ENCODE measurements at regions of chr12 and their contacts with region 1.

Region 1: GRCh38 chr12:82620904-82621303 is 65.8 kb upstream of the TMTC2 start:
- DNase-seq: no peak
- ATAC-seq: no peak
- H3K4me3 ChIP-seq: no peak overlapping the region
- H3K27ac ChIP-seq: no peak overlapping the region
- H3K4me1 ChIP-seq: no peaks in the 10 kb centered on the region
- H3K27me3 ChIP-seq: no peaks in the 10 kb centered on the region
- CTCF ChIP-seq: no peak
- EP300 ChIP-seq: no peak
- POLR2A ChIP-seq: no peak
- RAD21 ChIP-seq: no peak

Region 2: DNA sequence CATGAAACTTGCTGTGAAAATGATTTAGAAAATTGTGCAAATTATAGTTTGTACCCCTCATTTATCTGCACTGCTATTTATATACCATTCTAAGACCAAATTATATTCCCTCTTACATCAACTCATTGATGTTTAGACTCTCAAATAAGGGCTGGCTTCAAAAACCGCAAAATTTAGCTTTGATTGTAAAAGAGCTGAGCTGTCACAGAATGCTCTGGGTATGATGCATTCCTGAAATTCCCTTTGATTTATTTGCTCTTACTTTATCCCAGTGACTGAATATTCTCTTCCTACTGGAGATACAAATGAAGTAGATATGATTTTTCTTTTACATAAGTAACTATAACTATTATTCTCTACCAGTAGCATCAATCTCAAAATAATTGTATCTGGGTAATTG is 12.2 kb before region 1 on chr12:
- CTCF ChIA-PET with region 1: interaction called, 4 read pairs
- POLR2A ChIA-PET with region 1: no interaction called
- RAD21 ChIA-PET with region 1: interaction called, 3 read pairs
- SMC1A ChIA-PET with region 1: interaction called, 10 read pairs
- in situ Hi-C with region 1: no loop called
- intact Hi-C with region 1: no loop called
- DNase-seq: no peak
- ATAC-seq: no peak
- H3K4me3 ChIP-seq: no peak overlapping the region
- H3K27ac ChIP-seq: no peak overlapping the region
- H3K4me1 ChIP-seq: no peaks in the 10 kb centered on the region; the same call in 1 of the 2 replicates
- H3K27me3 ChIP-seq: no peaks in the 10 kb centered on the region
- CTCF ChIP-seq: no peak
- EP300 ChIP-seq: no peak
- POLR2A ChIP-seq: no peak
- RAD21 ChIP-seq: no peak

Region 3: DNA sequence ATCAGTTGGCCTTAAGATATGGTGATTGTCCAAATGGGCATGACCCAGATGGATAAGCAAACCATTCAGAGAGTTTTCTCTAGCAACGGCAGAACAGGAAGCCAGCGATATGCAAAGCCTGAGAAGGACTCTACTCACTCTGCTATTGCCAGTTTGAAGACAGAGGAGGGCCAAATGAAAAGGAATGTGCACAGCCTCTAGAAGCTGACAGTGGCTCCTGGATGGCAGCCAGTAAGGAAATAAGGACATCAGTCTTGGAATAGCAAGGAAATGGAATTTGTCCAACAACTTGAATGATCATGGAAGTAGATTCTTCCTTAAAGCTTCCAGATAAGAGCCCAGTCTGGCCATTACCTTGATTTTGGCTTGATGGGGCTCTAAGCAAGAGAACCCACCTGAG is 125.8 kb after region 1 on chr12:
- CTCF ChIA-PET with region 1: no interaction called
- POLR2A ChIA-PET with region 1: no interaction called
- RAD21 ChIA-PET with region 1: no interaction called
- SMC1A ChIA-PET with region 1: no interaction called
- in situ Hi-C with region 1: no loop called
- intact Hi-C with region 1: no loop called
- DNase-seq: no peak
- ATAC-seq: no peak
- H3K4me3 ChIP-seq: no peak overlapping the region
- H3K27ac ChIP-seq: no peak overlapping the region
- H3K4me1 ChIP-seq: no peaks in the 10 kb centered on the region
- H3K27me3 ChIP-seq: no peaks in the 10 kb centered on the region
- CTCF ChIP-seq: no peak
- EP300 ChIP-seq: no peak
- POLR2A ChIP-seq: no peak
- RAD21 ChIP-seq: no peak

Region 4: DNA sequence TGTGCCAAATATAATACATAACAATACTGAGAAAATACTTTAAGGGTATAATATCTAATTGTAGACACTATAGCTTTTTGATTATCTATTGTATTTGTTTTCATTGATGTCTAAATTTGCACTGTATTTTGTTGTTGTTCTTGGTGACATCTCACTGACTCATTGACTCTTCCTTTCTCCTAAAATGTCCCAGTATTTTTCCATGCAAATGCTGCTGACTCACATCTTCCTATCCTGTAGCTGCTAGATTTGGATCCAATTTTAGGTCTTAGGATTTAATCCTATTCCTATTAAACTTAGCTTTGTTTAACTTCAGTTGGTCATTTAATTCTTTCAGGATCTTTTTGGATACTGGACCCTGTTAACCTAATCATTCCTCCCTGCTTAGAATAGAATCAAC is 214.3 kb after region 1 on chr12:
- CTCF ChIA-PET with region 1: no interaction called
- POLR2A ChIA-PET with region 1: no interaction called
- RAD21 ChIA-PET with region 1: no interaction called
- SMC1A ChIA-PET with region 1: no interaction called
- in situ Hi-C with region 1: no loop called
- intact Hi-C with region 1: no loop called
- DNase-seq: no peak
- ATAC-seq: no peak
- H3K4me3 ChIP-seq: no peak overlapping the region
- H3K27ac ChIP-seq: no peak overlapping the region
- H3K4me1 ChIP-seq: no peaks in the 10 kb centered on the region
- H3K27me3 ChIP-seq: no peaks in the 10 kb centered on the region
- CTCF ChIP-seq: no peak
- EP300 ChIP-seq: no peak
- POLR2A ChIP-seq: no peak
- RAD21 ChIP-seq: no peak

Region 5: DNA sequence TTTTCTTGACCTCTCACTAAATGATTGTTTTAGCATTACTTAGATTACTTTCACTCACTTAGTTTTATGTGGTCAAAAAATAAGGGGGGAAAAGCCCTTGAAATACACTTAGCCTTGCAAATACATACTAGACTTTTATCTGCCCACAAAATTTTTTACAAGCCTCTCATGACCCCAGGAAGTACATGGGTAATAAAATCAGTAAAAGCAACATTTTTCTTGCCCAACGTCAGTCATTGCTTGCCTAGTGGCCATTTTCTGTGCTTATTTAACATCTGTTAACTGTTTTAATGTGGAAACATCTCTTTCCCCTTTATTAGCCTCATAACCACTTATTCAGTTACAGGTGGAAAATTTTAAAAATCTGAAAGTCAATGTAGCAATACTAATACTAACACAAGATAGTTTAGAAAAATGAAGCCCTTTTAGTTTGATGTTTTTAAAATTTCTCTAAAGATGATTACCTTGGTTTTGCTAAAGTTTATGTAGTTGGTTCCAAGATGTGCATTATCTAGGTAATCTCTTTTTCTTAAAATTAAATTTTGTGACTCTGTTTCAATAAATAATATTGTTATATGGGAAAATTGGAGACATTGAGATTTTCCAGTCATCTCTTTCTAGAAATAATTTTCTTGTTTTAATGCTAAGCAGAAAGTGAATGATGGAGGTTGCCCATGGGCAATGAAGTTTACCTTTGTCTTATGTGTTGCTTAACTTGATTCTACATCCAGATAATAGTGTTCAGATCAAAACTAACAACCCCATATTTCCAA is 241.4 kb after region 1 on chr12:
- CTCF ChIA-PET with region 1: no interaction called
- POLR2A ChIA-PET with region 1: no interaction called
- RAD21 ChIA-PET with region 1: no interaction called
- SMC1A ChIA-PET with region 1: no interaction called
- in situ Hi-C with region 1: no loop called
- intact Hi-C with region 1: no loop called
- DNase-seq: no peak
- ATAC-seq: no peak
- H3K4me3 ChIP-seq: no peak overlapping the region
- H3K27ac ChIP-seq: no peak overlapping the region
- H3K4me1 ChIP-seq: no peaks in the 10 kb centered on the region
- H3K27me3 ChIP-seq: no peaks in the 10 kb centered on the region
- CTCF ChIP-seq: no peak
- EP300 ChIP-seq: no peak
- POLR2A ChIP-seq: no peak
- RAD21 ChIP-seq: no peak